Activated CD8-positive, alpha-beta T cell treated with anti-CD3 and anti-CD28 coated beads, Interleukin-2, amount 10 ng/mL, durations not matched to agents 7 days and 5 days (primary cell): ENCODE measurements at regions of chr6 and their contacts with region 1.

Region 1: DNA sequence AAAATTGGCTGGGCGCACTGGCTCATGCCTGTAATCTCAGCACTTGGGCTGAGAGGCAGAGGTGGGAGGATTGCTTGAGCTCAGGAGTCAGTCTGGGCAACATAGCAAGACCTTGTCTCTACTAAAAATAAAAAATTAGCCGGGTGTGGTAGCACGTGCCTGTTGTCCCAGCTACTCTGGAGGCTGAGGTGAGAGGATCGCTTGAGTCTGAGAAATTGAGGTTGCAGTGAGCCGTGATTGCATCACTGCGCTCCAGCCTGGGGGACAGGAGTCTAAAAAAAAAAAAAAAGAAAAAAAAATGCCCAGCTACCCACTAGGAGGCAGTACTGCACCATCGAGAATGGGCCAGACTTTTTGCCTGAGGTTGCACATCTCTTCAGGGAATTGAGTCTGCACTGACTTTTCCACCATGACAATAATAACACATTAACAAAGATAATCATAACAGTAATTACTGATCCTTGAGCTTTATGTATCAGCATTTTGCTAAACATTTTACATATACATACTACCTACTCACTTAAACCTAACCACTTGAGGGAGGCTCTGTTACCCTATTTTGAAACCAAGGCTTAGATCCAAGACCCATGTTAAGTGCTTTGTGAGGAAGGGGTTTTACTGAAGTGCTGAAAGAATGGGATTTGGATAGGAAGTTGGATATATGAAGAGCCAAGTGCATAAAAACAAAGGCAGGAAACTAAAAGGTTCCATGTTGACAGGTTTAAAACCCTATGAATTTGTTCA is 21.0 kb downstream of the SRSF3 start:
- DNase-seq: peak; percentile 57
- ATAC-seq: peak; percentile 38
- H3K4me3 Mint-ChIP-seq: no peak overlapping the region
- H3K27ac Mint-ChIP-seq: no peak overlapping the region
- H3K4me1 Mint-ChIP-seq: peaks cover 8% of the 10 kb centered on the region
- H3K27me3 Mint-ChIP-seq: no peaks in the 10 kb centered on the region

Region 2: GRCh38 chr6:36599791-36600209 is 15.4 kb before region 1 on chr6:
- CTCF ChIA-PET with region 1: interaction called, 17 read pairs
- POLR2A ChIA-PET with region 1: interaction called, 7 read pairs
- DNase-seq: peak; percentile 81
- ATAC-seq: peak; percentile 80
- H3K4me3 Mint-ChIP-seq: peak overlapping the region; percentile 90
- H3K27ac Mint-ChIP-seq: peak overlapping the region; percentile 79
- H3K4me1 Mint-ChIP-seq: peaks cover 63% of the 10 kb centered on the region
- H3K27me3 Mint-ChIP-seq: no peaks in the 10 kb centered on the region

Region 3: GRCh38 chr6:36650848-36651478 is 35.8 kb after region 1 on chr6:
- CTCF ChIA-PET with region 1: interaction called, 11 read pairs
- POLR2A ChIA-PET with region 1: no interaction called
- DNase-seq: no peak
- ATAC-seq: no peak
- H3K4me3 Mint-ChIP-seq: no peak overlapping the region
- H3K27ac Mint-ChIP-seq: no peak overlapping the region
- H3K4me1 Mint-ChIP-seq: no peaks in the 10 kb centered on the region
- H3K27me3 Mint-ChIP-seq: peaks cover 32% of the 10 kb centered on the region

Region 4: DNA sequence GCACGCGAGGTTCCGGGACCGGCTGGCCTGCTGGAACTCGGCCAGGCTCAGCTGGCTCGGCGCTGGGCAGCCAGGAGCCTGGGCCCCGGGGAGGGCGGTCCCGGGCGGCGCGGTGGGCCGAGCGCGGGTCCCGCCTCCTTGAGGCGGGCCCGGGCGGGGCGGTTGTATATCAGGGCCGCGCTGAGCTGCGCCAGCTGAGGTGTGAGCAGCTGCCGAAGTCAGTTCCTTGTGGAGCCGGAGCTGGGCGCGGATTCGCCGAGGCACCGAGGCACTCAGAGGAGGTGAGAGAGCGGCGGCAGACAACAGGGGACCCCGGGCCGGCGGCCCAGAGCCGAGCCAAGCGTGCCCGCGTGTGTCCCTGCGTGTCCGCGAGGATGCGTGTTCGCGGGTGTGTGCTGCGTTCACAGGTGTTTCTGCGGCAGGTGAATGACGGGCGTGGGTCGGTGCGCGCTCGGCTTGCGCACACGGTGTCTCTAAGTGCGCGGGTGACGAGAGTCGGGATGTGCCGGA is 63.4 kb after region 1 on chr6 and contains the start of gene CDKN1A:
- CTCF ChIA-PET with region 1: interaction called, 12 read pairs
- POLR2A ChIA-PET with region 1: interaction called, 3 read pairs
- DNase-seq: peak; percentile 84
- ATAC-seq: peak; percentile 72
- H3K4me3 Mint-ChIP-seq: peak within 1 kb of the TSS; percentile 89
- H3K27ac Mint-ChIP-seq: peak within 1 kb of the TSS; percentile 90
- H3K4me1 Mint-ChIP-seq: peaks cover 65% of the 10 kb centered on the region
- H3K27me3 Mint-ChIP-seq: no peaks in the 10 kb centered on the region
- total RNA-seq, gene CDKN1A: 43.4 to 44.2 TPM

Region 5: DNA sequence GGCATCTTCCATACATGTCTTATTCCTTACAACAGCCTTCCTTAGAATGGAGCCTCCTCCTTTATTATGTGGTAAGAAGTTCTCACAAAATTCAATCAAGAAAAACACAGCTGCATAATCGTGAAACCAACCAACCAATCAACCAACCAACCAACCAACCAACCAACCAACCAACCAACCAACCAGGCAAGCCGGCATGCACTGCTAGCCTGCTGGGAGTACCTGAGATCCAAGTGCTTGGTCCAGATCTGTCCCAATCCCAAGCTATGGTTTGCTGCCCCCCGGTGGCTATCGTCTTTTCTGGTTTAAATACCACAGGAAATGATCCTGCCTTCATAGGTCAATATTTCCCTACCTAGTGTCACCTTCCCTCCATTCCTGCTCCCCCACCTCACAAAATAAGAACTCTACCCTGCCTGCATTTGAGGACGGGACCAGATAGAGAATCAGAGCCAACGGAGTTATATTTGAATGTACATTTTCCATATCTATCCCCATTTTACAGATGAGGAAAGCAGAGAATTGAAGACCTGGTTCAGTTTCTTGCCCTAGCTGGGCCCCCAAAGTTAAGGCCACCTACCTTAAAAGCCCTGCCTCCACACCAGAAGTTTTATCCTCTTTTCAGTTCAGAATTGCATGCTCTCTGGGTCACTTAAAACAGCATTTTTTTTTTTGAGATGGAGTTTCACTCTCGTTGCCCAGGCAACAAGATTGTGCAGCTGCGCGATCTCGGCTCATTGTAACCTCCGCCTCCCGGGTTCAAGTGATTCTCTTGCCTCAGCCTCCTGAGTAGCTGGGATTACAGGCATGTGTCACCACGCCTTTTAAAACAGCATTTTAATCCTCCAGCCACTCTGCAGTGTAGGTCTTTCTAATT is 109.6 kb after region 1 on chr6:
- CTCF ChIA-PET with region 1: interaction called, 11 read pairs
- POLR2A ChIA-PET with region 1: no interaction called
- DNase-seq: peak; percentile 73
- ATAC-seq: no peak
- H3K4me3 Mint-ChIP-seq: no peak overlapping the region
- H3K27ac Mint-ChIP-seq: peak overlapping the region; percentile 48
- H3K4me1 Mint-ChIP-seq: peaks cover 23% of the 10 kb centered on the region
- H3K27me3 Mint-ChIP-seq: no peaks in the 10 kb centered on the region